PC-9 (cell line): ENCODE measurements at regions of chr10 and their contacts with region 1.

Region 1: DNA sequence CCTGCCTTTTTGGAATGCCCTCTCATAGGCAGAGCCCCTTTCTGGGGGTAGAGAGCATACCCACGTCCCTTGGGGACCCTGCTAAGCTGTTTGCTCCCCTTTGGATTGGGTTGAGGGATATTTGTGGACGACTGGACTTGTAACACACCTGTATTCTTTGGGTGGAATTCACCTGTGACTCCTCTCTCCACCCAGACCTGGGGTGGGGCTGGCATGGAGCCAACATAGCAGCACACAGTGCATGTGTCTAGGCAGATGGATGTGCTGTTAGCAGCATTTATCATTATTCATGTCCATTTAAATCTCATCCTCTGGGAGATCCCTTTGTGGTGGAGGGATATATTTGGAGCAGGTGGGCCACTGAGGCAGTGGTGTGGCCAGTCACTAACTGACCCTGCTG is 51.0 kb downstream of the CDH23 start:
- DNase-seq: peak in 1 of 2 experiments; percentile 37
- H3K4me3 ChIP-seq: no peak overlapping the region
- H3K27ac ChIP-seq: no peak overlapping the region
- H3K4me1 ChIP-seq: no peaks in the 10 kb centered on the region
- H3K27me3 ChIP-seq: no peaks in the 10 kb centered on the region
- CTCF ChIP-seq: no peak

Region 2: GRCh38 chr10:71396084-71396720 is 51.5 kb before region 1 on chr10:
- CTCF ChIA-PET with region 1: no interaction called
- POLR2A ChIA-PET with region 1: no interaction called
- intact Hi-C with region 1: no loop called
- DNase-seq: peak; percentile 49 to 70
- H3K4me3 ChIP-seq: peak overlapping the region; percentile 60
- H3K27ac ChIP-seq: no peak overlapping the region
- H3K4me1 ChIP-seq: peaks cover 41% of the 10 kb centered on the region
- H3K27me3 ChIP-seq: peaks cover 8% of the 10 kb centered on the region; the same call in 1 of the 2 replicates
- CTCF ChIP-seq: peak; percentile 57

Region 3: GRCh38 chr10:71408436-71409225 is 39.0 kb before region 1 on chr10:
- CTCF ChIA-PET with region 1: no interaction called
- POLR2A ChIA-PET with region 1: no interaction called
- intact Hi-C with region 1: no loop called
- DNase-seq: no peak
- H3K4me3 ChIP-seq: no peak overlapping the region
- H3K27ac ChIP-seq: no peak overlapping the region
- H3K4me1 ChIP-seq: no peaks in the 10 kb centered on the region
- H3K27me3 ChIP-seq: no peaks in the 10 kb centered on the region
- CTCF ChIP-seq: no peak

Region 4: GRCh38 chr10:71486484-71487114 is 38.9 kb after region 1 on chr10:
- CTCF ChIA-PET with region 1: interaction called, 12 read pairs
- POLR2A ChIA-PET with region 1: no interaction called
- intact Hi-C with region 1: no loop called
- DNase-seq: peak in 1 of 2 experiments; percentile 42
- H3K4me3 ChIP-seq: no peak overlapping the region
- H3K27ac ChIP-seq: no peak overlapping the region
- H3K4me1 ChIP-seq: peaks cover 10% of the 10 kb centered on the region; the same call in 1 of the 2 replicates
- H3K27me3 ChIP-seq: no peaks in the 10 kb centered on the region
- CTCF ChIP-seq: peak; percentile 65